ENCODE measurements at regions of chr7 and their contacts with region 1.

Region 1: DNA sequence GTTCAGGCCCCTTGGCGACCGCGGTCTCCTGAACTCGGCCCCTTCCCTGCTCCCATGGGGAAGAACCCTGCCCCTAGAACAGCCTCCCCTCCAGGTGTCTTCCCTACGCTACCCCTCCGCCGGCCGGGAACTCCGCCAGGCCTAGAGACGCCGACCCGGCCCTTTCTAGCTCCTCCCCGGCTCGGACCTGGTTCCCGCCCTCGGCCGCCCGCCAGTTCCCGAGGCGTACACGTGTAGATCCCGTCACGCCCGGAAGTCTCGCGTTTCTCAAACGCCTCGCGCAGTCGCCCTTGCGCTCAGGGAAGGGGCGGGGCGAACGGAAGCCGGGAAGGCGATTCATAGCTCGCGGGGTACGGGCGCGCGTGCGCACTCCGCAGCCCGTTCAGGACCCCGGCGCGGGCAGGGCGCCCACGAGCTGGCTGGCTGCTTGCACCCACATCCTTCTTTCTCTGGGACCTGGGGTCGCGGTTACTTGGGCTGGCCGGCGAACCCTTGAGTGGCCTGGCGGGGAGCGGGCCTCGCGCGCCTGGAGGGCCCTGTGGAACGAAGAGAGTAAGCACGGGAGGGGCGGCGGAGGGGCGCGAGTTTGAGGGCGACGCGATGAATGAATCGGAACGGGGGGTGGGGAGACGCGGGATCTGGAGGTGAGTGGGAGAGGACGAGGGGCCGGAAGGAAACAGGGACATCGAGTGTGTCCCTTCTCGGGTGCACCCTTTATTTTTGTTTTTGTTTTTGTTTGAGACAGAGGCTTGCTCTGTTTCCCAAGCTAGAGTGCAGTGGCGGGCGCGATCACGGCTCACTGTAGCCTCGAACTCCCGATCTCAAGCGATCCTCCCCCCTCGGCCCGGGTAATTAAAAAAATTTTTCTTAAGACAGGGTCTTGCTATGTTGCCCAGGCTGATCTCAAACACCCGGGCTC is at the start of gene POP7:
- DNase-seq: peak; percentile 90
- ATAC-seq: peak; percentile 98
- H3K4me3 ChIP-seq: peak within 1 kb of the TSS; percentile 97
- H3K27ac ChIP-seq: peak within 1 kb of the TSS; percentile 93
- H3K4me1 ChIP-seq: peaks cover 13% of the 10 kb centered on the region
- H3K27me3 ChIP-seq: no peaks in the 10 kb centered on the region
- CTCF ChIP-seq: no peak
- EP300 ChIP-seq: no peak
- POLR2A ChIP-seq: peak; percentile 89
- RAD21 ChIP-seq: no peak
- polyA plus RNA-seq, gene POP7: 12.1 to 37.9 TPM

Region 2: DNA sequence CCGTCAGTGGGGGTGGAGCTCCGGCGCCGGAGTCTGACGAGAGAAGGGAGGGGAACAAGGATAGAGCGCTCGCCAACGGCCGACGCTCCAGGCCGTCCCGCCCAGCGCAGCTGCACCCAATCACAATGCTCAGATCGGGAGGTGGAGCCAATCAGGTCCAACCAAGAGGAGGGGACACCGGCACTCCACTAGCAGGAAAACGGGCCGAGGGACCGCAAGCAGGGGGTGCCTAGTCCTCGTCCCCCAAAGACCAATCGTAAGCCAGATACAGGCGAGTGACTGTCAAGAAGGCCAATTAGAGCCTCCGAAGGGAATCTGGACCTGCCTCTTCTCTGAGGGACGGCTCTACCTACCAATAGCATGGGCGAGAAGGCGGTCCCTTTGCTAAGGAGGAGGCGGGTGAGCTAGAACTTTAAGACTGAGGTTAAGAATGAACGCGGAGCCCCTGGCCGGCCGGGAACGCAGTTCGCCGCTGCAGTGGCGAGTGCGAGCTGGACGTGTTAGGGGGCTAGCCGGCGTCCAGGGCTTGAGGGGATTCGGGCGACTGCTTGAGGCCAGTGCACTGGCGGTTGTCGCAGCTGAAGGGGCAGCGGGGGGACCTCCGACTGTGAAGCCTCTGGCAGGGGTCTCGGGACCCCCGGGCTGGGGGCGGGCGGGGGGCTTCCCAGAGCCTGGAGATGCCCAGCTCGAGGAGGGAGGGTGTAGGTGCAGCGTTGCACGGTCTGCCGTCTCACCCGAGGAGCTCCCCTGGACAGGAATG is 119.6 kb before region 1 on chr7 and contains the start of gene FBXO24:
- CTCF ChIA-PET with region 1: interaction called, 16 read pairs
- POLR2A ChIA-PET with region 1: interaction called, 16 read pairs
- RAD21 ChIA-PET with region 1: interaction called, 13 read pairs
- SMC1A ChIA-PET with region 1: interaction called, 14 read pairs
- in situ Hi-C with region 1: no loop called
- intact Hi-C with region 1: no loop called
- DNase-seq: peak; percentile 100
- ATAC-seq: peak; percentile 90
- H3K4me3 ChIP-seq: peak within 1 kb of the TSS; percentile 83
- H3K27ac ChIP-seq: peak within 1 kb of the TSS; percentile 88
- H3K4me1 ChIP-seq: peaks cover 24% of the 10 kb centered on the region
- H3K27me3 ChIP-seq: no peaks in the 10 kb centered on the region
- CTCF ChIP-seq: no peak
- EP300 ChIP-seq: 0 out of 4 replicates have a peak, but pooled peaks of 1 of the 2 experiments have one; percentile 3
- POLR2A ChIP-seq: peak; percentile 53; the same call in 1 of the 2 replicates
- RAD21 ChIP-seq: no peak
- polyA plus RNA-seq, gene FBXO24: not detected

Region 3: DNA sequence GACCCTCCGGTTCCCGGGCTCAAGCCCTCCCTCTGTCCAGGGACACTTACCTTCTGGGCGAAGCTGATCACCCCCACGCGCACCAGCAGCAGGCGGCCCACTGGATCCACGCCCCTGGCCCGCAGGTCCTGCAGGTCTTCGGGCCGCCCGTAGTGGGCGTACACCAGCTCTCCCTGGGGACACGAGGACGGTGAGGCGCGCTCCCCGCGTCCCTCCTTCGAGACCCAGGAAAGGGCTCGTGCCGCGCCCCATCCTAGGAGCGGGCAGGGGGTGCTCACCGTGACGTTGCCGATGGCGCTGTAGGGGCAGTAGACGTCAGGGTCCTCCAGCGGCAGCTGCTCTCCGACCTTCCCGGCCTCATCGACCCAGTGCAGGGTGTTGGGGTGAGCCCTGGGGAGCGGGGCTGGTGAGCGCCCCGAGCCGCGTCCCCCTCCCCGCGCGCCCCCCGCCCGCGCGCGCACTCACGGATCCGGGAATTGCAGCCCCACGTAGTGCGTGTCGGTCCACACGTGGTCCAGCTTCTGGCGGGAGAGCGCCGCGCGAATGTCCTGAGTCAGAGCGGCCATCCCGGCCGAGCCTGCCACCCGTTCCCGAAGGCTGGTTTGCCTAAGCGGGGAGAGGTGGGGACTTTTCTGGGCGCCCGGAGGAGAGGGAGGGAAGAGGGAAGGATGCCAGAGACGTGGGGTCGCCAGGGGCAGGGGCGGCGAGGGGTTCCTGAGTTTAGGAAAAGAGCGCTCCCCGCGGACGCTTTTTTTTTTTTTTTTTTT is 72.9 kb before region 1 on chr7:
- CTCF ChIA-PET with region 1: interaction called, 5 read pairs
- POLR2A ChIA-PET with region 1: interaction called, 5 read pairs
- RAD21 ChIA-PET with region 1: interaction called, 3 read pairs
- SMC1A ChIA-PET with region 1: no interaction called
- in situ Hi-C with region 1: no loop called
- intact Hi-C with region 1: loop called (anchors 5 kb)
- DNase-seq: no peak
- ATAC-seq: peak; percentile 84
- H3K4me3 ChIP-seq: peak overlapping the region; percentile 76
- H3K27ac ChIP-seq: peak overlapping the region; percentile 24; the same call in 1 of the 2 replicates
- H3K4me1 ChIP-seq: peaks cover 6% of the 10 kb centered on the region
- H3K27me3 ChIP-seq: no peaks in the 10 kb centered on the region; a peak in 1 of 4 replicates
- CTCF ChIP-seq: peak; percentile 47 to 64 (median 48)
- EP300 ChIP-seq: no peak
- POLR2A ChIP-seq: peak; percentile 70
- RAD21 ChIP-seq: no peak

Region 4: GRCh38 chr7:100649826-100650547 is 56.0 kb before region 1 on chr7:
- CTCF ChIA-PET with region 1: no interaction called
- POLR2A ChIA-PET with region 1: no interaction called
- RAD21 ChIA-PET with region 1: no interaction called
- SMC1A ChIA-PET with region 1: no interaction called
- in situ Hi-C with region 1: no loop called
- intact Hi-C with region 1: no loop called
- DNase-seq: no peak
- ATAC-seq: no peak
- H3K4me3 ChIP-seq: no peak overlapping the region
- H3K27ac ChIP-seq: no peak overlapping the region
- H3K4me1 ChIP-seq: no peaks in the 10 kb centered on the region
- H3K27me3 ChIP-seq: peaks cover 0 to 3% of the 10 kb centered on the region in 2 experiments; a peak in 2 of 4 replicates
- CTCF ChIP-seq: no peak
- EP300 ChIP-seq: no peak
- POLR2A ChIP-seq: no peak
- RAD21 ChIP-seq: no peak

Region 5: DNA sequence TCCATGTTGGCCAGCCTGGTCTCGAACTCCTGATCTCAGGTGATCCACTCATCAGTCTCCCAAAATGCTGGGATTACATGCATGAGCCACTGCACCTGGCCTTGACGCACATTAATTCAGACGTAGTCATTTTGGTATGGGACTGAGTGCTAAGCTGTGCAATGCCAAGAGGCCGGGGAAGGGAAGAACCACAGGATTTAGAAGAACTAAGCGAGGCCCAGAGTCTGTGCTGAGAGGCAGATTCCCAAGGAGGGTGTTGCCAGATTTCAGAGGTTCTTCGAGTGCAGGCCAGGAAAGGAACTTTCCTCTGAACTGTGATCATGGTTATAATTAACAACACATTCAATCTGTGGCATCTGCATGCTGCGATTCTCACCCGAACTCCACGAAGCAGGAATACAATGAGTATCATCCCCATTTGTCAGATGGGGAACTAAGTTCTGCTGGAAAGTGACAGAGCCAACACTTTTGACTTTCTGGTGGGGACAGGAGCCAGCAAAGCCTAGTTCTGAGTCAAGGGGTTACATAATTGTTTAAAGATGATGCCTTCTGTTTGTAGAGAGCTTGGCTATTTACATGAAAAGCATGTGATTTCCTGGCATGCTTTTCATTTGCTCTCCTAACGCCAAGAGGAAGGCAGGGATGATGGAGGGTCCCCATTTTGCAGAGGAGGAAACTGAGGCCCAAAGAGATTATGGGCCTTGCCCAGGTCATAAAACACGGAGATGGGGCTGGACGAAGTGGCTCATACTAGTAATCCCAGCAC is 21.2 kb after region 1 on chr7:
- CTCF ChIA-PET with region 1: interaction called, 56 read pairs
- POLR2A ChIA-PET with region 1: no interaction called
- RAD21 ChIA-PET with region 1: interaction called, 21 read pairs
- SMC1A ChIA-PET with region 1: interaction called, 18 read pairs
- in situ Hi-C with region 1: no loop called
- intact Hi-C with region 1: no loop called
- DNase-seq: no peak
- ATAC-seq: no peak
- H3K4me3 ChIP-seq: no peak overlapping the region
- H3K27ac ChIP-seq: no peak overlapping the region
- H3K4me1 ChIP-seq: no peaks in the 10 kb centered on the region
- H3K27me3 ChIP-seq: peaks cover 0 to 8% of the 10 kb centered on the region in 2 experiments; a peak in 3 of 4 replicates
- CTCF ChIP-seq: no peak
- EP300 ChIP-seq: no peak
- POLR2A ChIP-seq: no peak
- RAD21 ChIP-seq: no peak

Region 6: GRCh38 chr7:100773491-100773890 is 67.5 kb after region 1 on chr7:
- CTCF ChIA-PET with region 1: no interaction called
- POLR2A ChIA-PET with region 1: no interaction called
- RAD21 ChIA-PET with region 1: no interaction called
- SMC1A ChIA-PET with region 1: no interaction called
- in situ Hi-C with region 1: no loop called
- intact Hi-C with region 1: no loop called
- DNase-seq: no peak
- ATAC-seq: no peak
- H3K4me3 ChIP-seq: no peak overlapping the region
- H3K27ac ChIP-seq: no peak overlapping the region
- H3K4me1 ChIP-seq: no peaks in the 10 kb centered on the region
- H3K27me3 ChIP-seq: no peaks in the 10 kb centered on the region; a peak in 2 of 4 replicates
- CTCF ChIP-seq: no peak
- EP300 ChIP-seq: no peak
- POLR2A ChIP-seq: no peak
- RAD21 ChIP-seq: no peak